ENCODE measurements at regions of chr16 and their contacts with region 1.

Region 1: DNA sequence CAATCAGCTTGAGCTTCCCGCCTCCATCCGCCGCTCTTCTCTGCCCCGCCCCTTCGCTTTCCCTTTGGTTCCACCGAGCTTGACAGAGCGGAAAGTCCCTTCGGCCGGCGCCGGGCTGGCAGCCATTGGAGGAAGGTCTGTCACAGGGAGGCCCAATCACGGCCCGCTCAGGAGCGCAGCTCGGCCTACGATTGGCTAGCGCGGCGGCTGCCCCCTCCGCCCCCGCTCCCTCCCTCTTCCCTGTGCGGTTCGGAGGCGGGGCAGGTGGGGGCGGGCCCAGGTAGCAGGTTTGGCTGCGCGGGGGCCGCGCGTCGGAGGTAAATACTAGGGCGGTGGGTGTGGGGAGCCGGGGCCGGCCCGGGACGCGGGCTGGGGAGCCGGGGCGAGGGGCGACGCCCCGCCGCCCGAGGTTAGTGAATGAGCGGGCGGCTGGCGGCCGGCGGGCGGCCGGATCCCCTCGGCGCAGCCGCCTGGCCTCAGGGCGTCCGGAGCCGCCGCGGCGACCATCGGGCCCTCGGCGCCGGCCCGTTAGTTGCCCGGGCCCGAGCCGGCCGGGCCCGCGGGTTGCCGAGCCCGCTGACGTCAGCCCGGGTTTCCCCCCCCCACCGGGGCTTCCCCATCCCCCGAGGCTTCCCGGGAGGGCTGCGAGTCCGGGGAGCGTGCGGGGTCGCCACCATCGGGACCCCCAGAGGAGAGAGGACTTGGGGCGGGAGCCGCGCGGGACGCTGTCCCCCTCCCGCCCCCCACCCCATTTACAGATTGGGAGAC is at the start of gene CYLD:
- DNase-seq: peak; percentile 98
- ATAC-seq: peak; percentile 97
- H3K4me3 Mint-ChIP-seq: peak within 1 kb of the TSS; percentile 96
- H3K27ac Mint-ChIP-seq: peak within 1 kb of the TSS; percentile 95
- H3K4me1 Mint-ChIP-seq: peaks cover 41% of the 10 kb centered on the region
- H3K27me3 Mint-ChIP-seq: no peaks in the 10 kb centered on the region
- total RNA-seq, gene CYLD: 166 to 172 TPM

Region 2: DNA sequence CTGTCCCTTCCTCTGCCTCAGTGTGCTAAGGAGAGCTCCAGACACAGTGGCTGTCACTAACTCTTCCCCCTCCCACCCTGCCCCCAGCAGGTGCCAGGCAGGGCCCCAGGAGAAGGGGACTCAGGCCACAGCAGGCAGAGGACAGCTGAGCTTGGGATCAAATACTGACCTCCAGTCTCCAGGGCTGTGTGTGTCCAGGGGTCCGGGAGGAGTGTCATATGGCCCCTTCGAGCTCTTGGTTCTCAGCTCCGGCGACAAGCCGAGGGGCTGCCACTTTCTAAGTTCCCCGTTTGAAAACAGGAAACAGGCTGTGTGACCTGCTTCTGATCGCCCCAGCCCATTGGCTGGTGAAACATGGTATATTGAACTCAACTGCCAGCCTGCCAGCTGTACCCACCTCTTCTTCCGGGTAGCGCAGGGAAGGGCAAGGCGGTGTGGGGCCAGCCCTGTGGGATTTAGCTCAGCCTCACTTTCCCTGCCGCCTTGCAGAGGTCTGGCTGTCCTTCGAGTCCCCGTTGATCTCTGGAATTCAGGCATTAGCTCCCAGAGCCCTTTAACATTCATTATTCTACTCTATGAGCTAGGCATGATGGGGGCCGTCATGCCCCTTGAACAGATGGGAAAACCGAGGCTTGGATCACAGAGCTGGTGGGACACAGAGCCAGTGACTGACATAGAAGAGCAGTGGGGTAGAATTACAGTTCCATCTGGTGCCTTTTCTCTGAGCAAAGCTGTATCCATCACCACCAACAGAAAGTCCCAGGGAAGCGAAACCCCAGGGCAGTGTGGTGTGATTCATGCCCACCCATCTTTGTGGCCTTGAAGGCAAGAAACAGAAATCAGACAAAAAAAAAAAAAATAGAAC is 60.7 kb before region 1 on chr16 and contains the start of gene SNX20:
- POLR2A ChIA-PET with region 1: interaction called, 112 read pairs
- DNase-seq: peak; percentile 64
- ATAC-seq: peak; percentile 66
- H3K4me3 Mint-ChIP-seq: peak within 1 kb of the TSS; percentile 92
- H3K27ac Mint-ChIP-seq: peak within 1 kb of the TSS; percentile 89
- H3K4me1 Mint-ChIP-seq: peaks cover 73% of the 10 kb centered on the region
- H3K27me3 Mint-ChIP-seq: no peaks in the 10 kb centered on the region
- total RNA-seq, gene SNX20: 70.6 to 76.3 TPM

Region 3: DNA sequence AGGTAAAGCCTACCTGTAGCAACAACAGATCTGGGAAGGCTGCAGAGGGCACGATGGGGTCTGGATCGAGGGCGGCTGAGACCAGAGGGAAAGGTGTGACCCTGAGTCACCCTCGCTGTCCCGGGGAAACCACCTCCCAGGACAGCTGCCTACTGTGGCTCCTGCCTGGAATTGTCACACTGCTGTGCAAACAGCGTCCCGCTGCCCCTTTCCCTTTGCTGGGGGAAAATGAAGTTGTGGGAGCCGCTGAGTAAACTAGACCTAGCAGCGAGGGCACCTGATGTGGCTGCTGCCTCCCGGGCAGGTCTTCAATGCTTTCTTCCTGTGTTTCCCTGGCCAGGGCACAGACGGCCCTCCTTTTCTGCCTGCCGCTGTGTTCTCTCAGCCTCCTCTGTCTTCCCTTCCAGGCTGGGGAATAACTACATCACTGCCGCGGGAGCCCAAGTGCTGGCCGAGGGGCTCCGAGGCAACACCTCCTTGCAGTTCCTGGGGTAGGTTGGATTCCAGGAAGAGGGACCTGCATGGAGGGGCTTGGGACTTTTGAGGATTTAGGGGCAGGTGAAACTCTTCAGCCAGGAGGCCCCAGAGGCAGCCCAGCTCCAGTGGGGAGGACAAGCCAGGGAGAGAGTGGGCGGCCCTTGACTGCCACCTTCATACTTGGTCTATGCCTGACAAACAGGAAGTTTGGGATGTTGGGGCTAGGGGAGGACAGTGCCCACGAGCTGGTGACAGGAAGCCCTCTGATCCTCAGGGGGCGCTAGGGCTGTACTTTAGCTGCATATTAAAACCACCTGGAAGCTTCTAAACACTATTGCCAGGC is 22.3 kb before region 1 on chr16:
- POLR2A ChIA-PET with region 1: interaction called, 10 read pairs
- DNase-seq: no peak
- ATAC-seq: peak; percentile 76
- H3K4me3 Mint-ChIP-seq: no peak overlapping the region
- H3K27ac Mint-ChIP-seq: peak overlapping the region; percentile 80
- H3K4me1 Mint-ChIP-seq: peaks cover 34% of the 10 kb centered on the region
- H3K27me3 Mint-ChIP-seq: no peaks in the 10 kb centered on the region

Region 4: GRCh38 chr16:50731130-50731988 is 10.6 kb before region 1 on chr16:
- POLR2A ChIA-PET with region 1: interaction called, 17 read pairs
- DNase-seq: no peak
- ATAC-seq: peak; percentile 80
- H3K4me3 Mint-ChIP-seq: peak overlapping the region; percentile 29
- H3K27ac Mint-ChIP-seq: peak overlapping the region; percentile 78
- H3K4me1 Mint-ChIP-seq: peaks cover 6% of the 10 kb centered on the region
- H3K27me3 Mint-ChIP-seq: no peaks in the 10 kb centered on the region

Measured in activated naive CD8-positive, alpha-beta T cell treated with anti-CD3 and anti-CD28 coated beads, Interleukin-2, amount 10 ng/mL, durations not matched to agents 7 days and 5 days (primary cell).